Breast epithelium (tissue), 4 donors: ENCODE measurements at regions of chr2 and their contacts with region 1.

Region 1: GRCh38 chr2:11154923-11155380 is 315 bp upstream of the SLC66A3 start:
- DNase-seq: peak; percentile 96 to 99
- H3K4me3 ChIP-seq: peak overlapping the region; percentile 73 to 79 (median 75)
- H3K27ac ChIP-seq: peak overlapping the region; percentile 91 to 92
- H3K4me1 ChIP-seq: no peaks in the 10 kb centered on the region
- H3K27me3 ChIP-seq: no peaks in the 10 kb centered on the region
- CTCF ChIP-seq: no peak
- POLR2A ChIP-seq: no peak

Region 2: GRCh38 chr2:10584796-10585475 is 570.0 kb before region 1 on chr2:
- intact Hi-C with region 1: loop called (anchors 5 kb)
- DNase-seq: no peak
- H3K4me3 ChIP-seq: no peak overlapping the region
- H3K27ac ChIP-seq: peak overlapping the region; percentile 23 to 29
- H3K4me1 ChIP-seq: no peaks in the 10 kb centered on the region
- H3K27me3 ChIP-seq: no peaks in the 10 kb centered on the region
- CTCF ChIP-seq: no peak
- POLR2A ChIP-seq: no peak